ENCODE measurements at regions of chr9 and their contacts with region 1.

Region 1: GRCh38 chr9:2857564-2858198 is 13.8 kb upstream of the PUM3 start:
- DNase-seq: peak; percentile 43 to 50 (median 48)
- H3K4me3 ChIP-seq: no peak overlapping the region
- H3K4me3 Mint-ChIP-seq: no peak overlapping the region
- H3K27ac ChIP-seq: no peak overlapping the region
- H3K27ac Mint-ChIP-seq: no peak overlapping the region
- H3K4me1 ChIP-seq: no peaks in the 10 kb centered on the region
- H3K4me1 Mint-ChIP-seq: peaks cover 0 to 7% (median 4%) of the 10 kb centered on the region in 4 donors
- H3K27me3 ChIP-seq: peaks cover 11% of the 10 kb centered on the region
- H3K27me3 Mint-ChIP-seq: peaks cover 16 to 19% of the 10 kb centered on the region in 2 donors

Region 2: DNA sequence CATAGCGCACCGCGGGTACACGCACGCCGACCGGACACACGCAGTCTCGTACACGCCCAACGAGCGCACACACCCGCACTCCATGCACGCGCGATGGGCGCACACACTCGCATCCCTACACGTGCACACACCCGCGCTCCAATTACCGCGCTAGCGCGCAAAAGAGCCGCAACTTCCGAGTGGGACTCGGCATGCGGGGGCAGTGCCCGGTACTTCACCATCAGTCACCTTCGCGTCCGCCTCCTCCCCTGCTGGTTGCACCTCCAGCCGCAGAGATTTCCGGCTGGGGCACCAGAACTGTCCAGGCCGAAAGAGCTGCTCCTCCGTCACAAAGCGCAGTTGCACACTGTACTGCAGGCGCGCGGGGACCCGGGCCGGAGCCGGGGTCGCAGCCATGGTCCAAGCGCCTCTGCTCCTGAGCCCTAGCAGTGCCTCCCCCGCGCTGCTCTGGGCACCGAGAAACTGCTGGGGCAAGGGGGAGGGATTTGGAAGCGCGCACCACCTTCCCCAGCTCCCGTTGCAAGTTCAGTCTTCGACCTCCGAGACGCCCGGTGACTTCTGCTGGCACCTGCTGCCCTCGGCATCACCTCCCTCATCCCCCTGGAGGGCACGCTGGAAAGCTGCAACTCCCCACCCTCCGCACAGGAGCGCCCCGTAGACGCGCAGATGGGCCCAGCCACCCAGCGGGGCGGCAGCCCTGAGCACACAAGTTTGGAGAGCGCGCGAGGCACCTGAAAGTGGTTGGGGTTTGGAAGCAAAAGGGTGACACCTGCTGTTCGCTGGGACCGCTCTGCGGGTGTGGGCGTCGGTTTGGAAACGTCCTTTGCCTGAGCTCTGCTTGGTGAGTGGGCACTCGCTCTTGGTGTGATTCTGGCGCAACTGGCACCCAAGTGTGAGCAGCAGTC is 323.6 kb after region 1 on chr9:
- CTCF ChIA-PET with region 1: no interaction called
- POLR2A ChIA-PET with region 1: no interaction called
- intact Hi-C with region 1: loop called (anchors 5 kb)
- DNase-seq: peak in 4 of 5 donors; percentile 3 to 26 (median 20)
- H3K4me3 ChIP-seq: no peak overlapping the region
- H3K4me3 Mint-ChIP-seq: peak overlapping the region in 7 of 8 donors; percentile 16 to 72 (median 47)
- H3K27ac ChIP-seq: no peak overlapping the region
- H3K27ac Mint-ChIP-seq: no peak overlapping the region
- H3K4me1 ChIP-seq: no peaks in the 10 kb centered on the region
- H3K4me1 Mint-ChIP-seq: peaks cover 0 to 18% (median 6%) of the 10 kb centered on the region in 4 donors
- H3K27me3 ChIP-seq: no peaks in the 10 kb centered on the region
- H3K27me3 Mint-ChIP-seq: peaks cover 21 to 22% of the 10 kb centered on the region in 2 donors

Region 3: GRCh38 chr9:3441197-3441816 is 583.6 kb after region 1 on chr9:
- CTCF ChIA-PET with region 1: interaction called, 3 read pairs
- POLR2A ChIA-PET with region 1: no interaction called
- intact Hi-C with region 1: loop called (anchors 5 kb)
- DNase-seq: peak; percentile 31 to 50 (median 44)
- H3K4me3 ChIP-seq: no peak overlapping the region
- H3K4me3 Mint-ChIP-seq: no peak overlapping the region
- H3K27ac ChIP-seq: no peak overlapping the region
- H3K27ac Mint-ChIP-seq: peak overlapping the region in 1 of 7 donors; percentile 62
- H3K4me1 ChIP-seq: no peaks in the 10 kb centered on the region
- H3K4me1 Mint-ChIP-seq: peaks cover 3 to 10% (median 6%) of the 10 kb centered on the region in 4 donors
- H3K27me3 ChIP-seq: no peaks in the 10 kb centered on the region
- H3K27me3 Mint-ChIP-seq: no peaks in the 10 kb centered on the region

Region 4: GRCh38 chr9:4117835-4118610 is 1260.3 kb after region 1 on chr9:
- CTCF ChIA-PET with region 1: interaction called, 3 read pairs
- POLR2A ChIA-PET with region 1: no interaction called
- intact Hi-C with region 1: loop called (anchors 5 kb)
- DNase-seq: peak in 4 of 5 donors; percentile 12 to 35 (median 22)
- H3K4me3 ChIP-seq: no peak overlapping the region
- H3K4me3 Mint-ChIP-seq: no peak overlapping the region
- H3K27ac ChIP-seq: no peak overlapping the region
- H3K27ac Mint-ChIP-seq: peak overlapping the region in 1 of 7 donors; percentile 31
- H3K4me1 ChIP-seq: no peaks in the 10 kb centered on the region
- H3K4me1 Mint-ChIP-seq: peaks cover 0 to 3% (median under 1%) of the 10 kb centered on the region in 4 donors
- H3K27me3 ChIP-seq: no peaks in the 10 kb centered on the region
- H3K27me3 Mint-ChIP-seq: no peaks in the 10 kb centered on the region

Region 5: DNA sequence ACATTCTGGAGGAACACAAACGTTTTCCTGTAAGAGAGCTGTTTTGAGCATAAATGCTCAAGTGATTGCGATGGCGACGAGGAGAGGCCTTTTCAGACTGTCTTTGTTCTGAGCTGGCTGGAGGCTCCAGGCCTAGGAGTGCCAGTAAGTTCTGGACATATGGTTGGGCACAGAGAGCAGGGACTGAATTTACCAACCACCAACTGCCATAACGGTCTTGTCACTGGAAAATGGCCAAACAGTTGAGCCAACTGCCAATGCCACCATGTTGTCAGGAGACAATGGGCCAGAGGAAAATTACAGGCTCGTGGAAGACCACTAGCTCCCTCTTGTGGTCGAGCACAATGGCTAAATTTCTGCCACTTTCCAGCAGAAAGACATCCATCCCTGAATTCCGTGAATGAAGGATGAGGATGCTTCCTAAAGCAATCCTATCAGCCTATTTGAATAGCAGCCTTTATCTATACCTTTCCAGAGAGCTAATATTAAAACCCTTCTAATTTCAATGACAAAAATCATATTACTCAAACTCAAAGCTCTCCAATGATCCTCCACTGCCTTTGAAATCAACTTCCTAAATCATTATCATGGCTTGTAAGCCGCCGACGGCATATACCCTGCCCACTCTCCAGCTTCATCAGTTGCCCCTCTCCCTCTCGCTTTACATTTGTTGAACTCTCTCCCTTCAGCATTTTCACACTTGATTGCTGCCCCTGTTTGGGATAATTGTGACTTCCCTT is 1509.1 kb after region 1 on chr9:
- CTCF ChIA-PET with region 1: interaction called, 7 read pairs
- POLR2A ChIA-PET with region 1: no interaction called
- intact Hi-C with region 1: loop called (anchors 1 kb)
- DNase-seq: peak in 3 of 5 donors; percentile 13 to 27 (median 21)
- H3K4me3 ChIP-seq: no peak overlapping the region
- H3K4me3 Mint-ChIP-seq: no peak overlapping the region
- H3K27ac ChIP-seq: no peak overlapping the region
- H3K27ac Mint-ChIP-seq: no peak overlapping the region
- H3K4me1 ChIP-seq: no peaks in the 10 kb centered on the region
- H3K4me1 Mint-ChIP-seq: no peaks in the 10 kb centered on the region
- H3K27me3 ChIP-seq: no peaks in the 10 kb centered on the region
- H3K27me3 Mint-ChIP-seq: peaks cover 1 to 4% of the 10 kb centered on the region in 2 donors

Region 6: DNA sequence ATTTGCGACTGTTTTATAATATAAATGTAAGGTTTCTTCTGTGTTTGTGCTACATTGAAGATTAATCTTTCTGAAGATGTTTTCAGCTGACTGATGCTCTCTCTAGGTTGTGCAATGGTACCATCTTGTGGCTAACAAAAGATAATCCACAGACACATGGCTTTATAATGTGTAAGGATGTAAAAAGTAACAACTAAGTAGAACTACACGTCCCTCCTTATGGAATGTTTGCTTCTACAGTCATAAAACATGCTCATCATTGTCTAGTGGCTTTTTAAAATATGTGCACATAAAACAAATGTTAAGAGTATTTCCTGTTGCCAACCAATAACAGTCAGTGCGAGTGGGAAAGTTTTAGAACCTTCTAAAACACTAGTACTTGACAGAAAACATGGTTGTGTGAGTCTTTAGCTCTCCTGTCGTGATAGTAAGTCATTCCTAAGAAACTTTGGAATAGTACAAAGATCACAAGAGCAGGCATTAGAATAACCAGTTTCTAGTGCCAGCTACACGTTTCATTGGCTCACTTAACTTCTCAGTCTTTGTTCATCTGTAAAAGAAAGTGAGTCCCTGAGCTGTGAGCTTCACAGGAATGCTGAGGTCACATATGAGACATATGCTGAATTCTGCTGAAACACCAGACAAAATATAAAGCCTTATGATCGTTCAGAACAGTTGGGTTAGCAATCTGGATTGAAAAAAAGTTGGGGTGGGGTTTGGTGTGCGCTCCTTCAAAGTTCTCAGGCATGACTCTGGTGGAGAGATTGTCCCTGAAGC is 1517.9 kb after region 1 on chr9:
- CTCF ChIA-PET with region 1: interaction called, 3 read pairs
- POLR2A ChIA-PET with region 1: no interaction called
- intact Hi-C with region 1: loop called (anchors 2 kb)
- DNase-seq: peak in 1 of 5 donors; percentile 1
- H3K4me3 ChIP-seq: no peak overlapping the region
- H3K4me3 Mint-ChIP-seq: no peak overlapping the region
- H3K27ac ChIP-seq: no peak overlapping the region
- H3K27ac Mint-ChIP-seq: no peak overlapping the region
- H3K4me1 ChIP-seq: no peaks in the 10 kb centered on the region
- H3K4me1 Mint-ChIP-seq: no peaks in the 10 kb centered on the region
- H3K27me3 ChIP-seq: no peaks in the 10 kb centered on the region
- H3K27me3 Mint-ChIP-seq: peaks cover 7 to 9% of the 10 kb centered on the region in 2 donors

Measured in CD4-positive, alpha-beta memory T cell (primary cell).